Calu3 (cell line): ENCODE measurements at regions of chr15 and their contacts with region 1.

Region 1: GRCh38 chr15:73972984-73973682 is 19.0 kb downstream of the STOML1 start:
- DNase-seq: peak; percentile 89
- H3K4me3 Mint-ChIP-seq: peak overlapping the region; percentile 44
- H3K27ac Mint-ChIP-seq: no peak overlapping the region
- H3K4me1 Mint-ChIP-seq: peaks cover 14% of the 10 kb centered on the region
- H3K27me3 Mint-ChIP-seq: peaks cover 18% of the 10 kb centered on the region
- CTCF ChIP-seq: peak; percentile 78

Region 2: GRCh38 chr15:73950831-73951561 is 22.1 kb before region 1 on chr15:
- CTCF ChIA-PET with region 1: interaction called, 21 read pairs
- intact Hi-C with region 1: no loop called
- DNase-seq: peak; percentile 93
- H3K4me3 Mint-ChIP-seq: no peak overlapping the region
- H3K27ac Mint-ChIP-seq: peak overlapping the region; percentile 52
- H3K4me1 Mint-ChIP-seq: peaks cover 12% of the 10 kb centered on the region
- H3K27me3 Mint-ChIP-seq: no peaks in the 10 kb centered on the region
- CTCF ChIP-seq: peak; percentile 79

Region 3: GRCh38 chr15:74011610-74012009 is 38.5 kb after region 1 on chr15:
- CTCF ChIA-PET with region 1: interaction called, 10 read pairs
- intact Hi-C with region 1: no loop called
- DNase-seq: no peak
- H3K4me3 Mint-ChIP-seq: peak overlapping the region; percentile 32
- H3K27ac Mint-ChIP-seq: peak overlapping the region; percentile 56
- H3K4me1 Mint-ChIP-seq: peaks cover 54% of the 10 kb centered on the region
- H3K27me3 Mint-ChIP-seq: no peaks in the 10 kb centered on the region
- CTCF ChIP-seq: no peak

Region 4: DNA sequence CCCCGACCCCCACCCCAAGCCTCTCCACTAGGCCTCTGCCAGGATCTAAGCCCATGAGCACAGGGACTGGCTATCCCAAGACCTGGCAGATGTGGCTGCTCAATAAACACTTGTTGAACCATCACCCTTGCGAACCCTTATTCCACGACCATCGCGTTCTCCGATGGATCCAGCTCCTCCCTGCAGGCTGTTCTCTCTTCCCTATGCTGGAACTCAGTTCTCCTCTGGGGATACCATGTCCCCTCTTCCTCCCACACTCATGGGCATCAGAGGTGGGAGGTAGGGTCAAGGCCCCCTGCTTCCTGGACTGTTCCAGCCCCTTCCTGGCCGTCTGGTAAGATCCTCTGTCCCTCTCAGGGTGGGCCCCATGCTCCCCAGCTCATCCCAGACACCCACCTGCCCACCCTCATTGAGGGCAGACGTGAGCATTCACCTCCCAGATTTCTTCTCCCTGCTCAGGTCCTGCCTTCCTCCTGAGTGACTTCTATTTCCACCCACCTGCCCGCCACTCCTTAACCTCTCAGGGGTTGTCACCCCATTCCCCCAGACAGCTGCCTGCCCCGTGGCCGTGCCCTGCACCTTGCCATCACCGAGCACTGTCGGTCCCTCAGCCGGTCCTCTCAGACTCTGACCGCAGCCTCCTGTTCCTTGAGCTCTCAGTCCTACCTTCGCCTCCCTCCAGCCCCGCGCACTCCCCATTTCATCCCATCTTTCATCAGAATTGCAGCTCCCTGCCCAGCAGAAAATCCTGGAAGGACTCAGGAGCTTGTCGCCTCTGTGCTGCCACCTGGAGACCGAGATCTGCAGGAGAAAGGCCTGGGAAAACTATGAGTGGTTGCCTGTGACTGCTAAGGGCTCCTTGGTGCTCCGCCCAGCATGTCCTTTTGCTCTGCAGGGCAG is 63.4 kb after region 1 on chr15:
- CTCF ChIA-PET with region 1: interaction called, 90 read pairs
- intact Hi-C with region 1: loop called (anchors 1 kb)
- DNase-seq: peak; percentile 62
- H3K4me3 Mint-ChIP-seq: no peak overlapping the region
- H3K27ac Mint-ChIP-seq: no peak overlapping the region
- H3K4me1 Mint-ChIP-seq: no peaks in the 10 kb centered on the region
- H3K27me3 Mint-ChIP-seq: no peaks in the 10 kb centered on the region
- CTCF ChIP-seq: peak; percentile 72

Region 5: DNA sequence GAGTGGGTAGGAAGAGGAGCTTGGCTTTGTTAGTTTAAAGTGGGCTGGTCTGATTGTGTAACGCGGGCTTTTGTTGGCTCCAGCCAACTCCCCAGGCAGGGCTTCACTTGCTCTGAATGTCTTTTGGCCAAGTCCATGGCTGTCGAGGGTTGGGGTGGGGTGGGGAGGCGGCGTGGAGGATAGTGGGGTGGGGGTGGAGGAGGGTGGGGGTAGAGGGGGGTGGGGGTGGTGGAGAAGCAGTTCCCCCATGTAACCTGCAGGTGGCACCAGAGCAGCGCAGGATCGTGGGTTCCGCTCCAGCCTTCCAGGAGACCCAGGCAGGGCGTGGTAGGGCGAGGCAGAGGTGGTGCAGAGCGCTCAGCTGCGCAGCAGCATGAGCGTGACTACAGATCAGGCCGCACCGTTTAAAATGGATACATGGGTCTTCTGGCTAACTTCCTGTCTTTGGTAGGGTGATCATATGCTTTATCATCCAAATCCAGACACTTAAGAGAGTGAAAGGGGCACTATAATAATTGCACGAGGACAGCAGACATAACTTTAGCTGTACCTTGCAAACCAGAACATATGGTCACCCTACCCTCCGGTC is 80.9 kb after region 1 on chr15:
- CTCF ChIA-PET with region 1: interaction called, 18 read pairs
- intact Hi-C with region 1: loop called (anchors 5 kb)
- DNase-seq: peak; percentile 83
- H3K4me3 Mint-ChIP-seq: no peak overlapping the region
- H3K27ac Mint-ChIP-seq: no peak overlapping the region
- H3K4me1 Mint-ChIP-seq: peaks cover 21% of the 10 kb centered on the region
- H3K27me3 Mint-ChIP-seq: peaks cover 17% of the 10 kb centered on the region
- CTCF ChIP-seq: peak; percentile 80

Region 6: DNA sequence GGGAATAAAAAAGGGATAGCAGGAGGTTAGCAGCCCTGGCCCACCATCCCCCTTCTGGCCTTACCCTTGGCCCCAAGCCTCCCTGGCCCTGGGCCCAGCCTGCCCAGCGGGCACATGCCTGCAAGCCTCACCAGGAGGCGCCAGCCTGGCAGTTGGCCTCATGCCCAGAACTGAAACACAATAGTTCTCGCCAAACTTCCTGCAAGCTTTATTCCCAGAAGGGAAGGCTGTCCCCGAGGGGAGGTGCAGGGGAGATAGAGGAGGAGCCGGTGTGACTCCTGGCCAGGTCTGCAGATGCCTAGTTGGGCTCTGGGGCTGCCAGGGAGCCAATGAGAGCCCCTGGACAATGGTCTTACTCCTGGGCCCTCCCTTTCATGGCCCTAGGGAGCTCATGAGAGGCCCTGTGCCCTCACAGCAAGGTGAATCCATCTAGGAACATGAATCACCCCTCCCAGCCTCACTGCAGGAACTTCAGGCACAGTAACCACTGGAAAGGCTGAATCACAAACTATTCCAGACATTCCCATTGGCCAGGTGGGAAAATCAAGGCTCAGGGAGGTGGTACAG is 267.0 kb after region 1 on chr15:
- CTCF ChIA-PET with region 1: no interaction called
- intact Hi-C with region 1: no loop called
- DNase-seq: peak; percentile 97
- H3K4me3 Mint-ChIP-seq: no peak overlapping the region
- H3K27ac Mint-ChIP-seq: peak overlapping the region; percentile 57
- H3K4me1 Mint-ChIP-seq: peaks cover 76% of the 10 kb centered on the region
- H3K27me3 Mint-ChIP-seq: no peaks in the 10 kb centered on the region
- CTCF ChIP-seq: peak; percentile 66

Region 7: DNA sequence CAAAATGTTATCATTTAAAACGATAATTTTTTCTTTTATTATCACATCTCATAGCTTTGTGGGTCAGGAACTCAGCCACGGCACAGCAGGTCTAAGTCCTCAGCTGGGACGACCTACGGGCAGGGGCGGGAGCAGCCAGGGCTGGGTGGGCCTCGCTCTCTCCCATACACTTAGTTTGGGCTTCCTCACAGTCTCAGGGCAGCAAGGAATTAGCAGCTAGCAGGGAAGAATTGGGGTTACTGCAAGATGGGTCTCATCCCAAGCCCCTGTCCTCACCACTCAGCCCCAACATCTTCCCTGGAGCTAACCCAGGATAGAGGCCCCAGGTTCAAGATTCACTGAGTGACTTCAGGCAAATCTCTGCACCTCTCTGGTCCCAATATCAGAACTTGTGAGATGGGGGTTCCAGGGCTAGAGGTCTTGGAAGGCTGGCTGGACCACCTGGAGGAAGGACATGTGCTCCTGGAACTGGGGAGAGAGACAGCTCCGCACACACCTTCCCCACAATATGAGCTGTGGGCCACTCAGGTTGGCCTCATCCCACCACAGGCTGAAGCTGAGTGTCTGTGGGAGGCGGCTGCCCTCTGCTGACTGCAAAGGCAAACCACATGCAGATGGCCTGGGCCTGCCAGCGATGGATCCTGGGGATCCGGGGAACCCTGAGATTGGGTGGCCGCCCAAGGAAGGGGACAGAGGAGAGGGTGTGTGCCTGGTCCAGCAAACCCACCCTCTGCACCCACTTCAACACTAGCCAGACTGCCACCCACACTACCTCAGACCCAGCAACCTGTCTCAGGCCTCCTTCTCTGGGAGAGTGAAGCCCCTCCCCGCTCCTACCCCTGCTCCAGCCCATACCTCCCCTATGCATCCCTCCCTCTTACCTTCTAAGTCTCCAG is 349.3 kb after region 1 on chr15:
- CTCF ChIA-PET with region 1: interaction called, 14 read pairs
- intact Hi-C with region 1: no loop called
- DNase-seq: peak; percentile 82
- H3K4me3 Mint-ChIP-seq: no peak overlapping the region
- H3K27ac Mint-ChIP-seq: no peak overlapping the region
- H3K4me1 Mint-ChIP-seq: peaks cover 8% of the 10 kb centered on the region
- H3K27me3 Mint-ChIP-seq: peaks cover 33% of the 10 kb centered on the region
- CTCF ChIP-seq: peak; percentile 88